ENCODE measurements at regions of chr10 and their contacts with region 1.

Region 1: DNA sequence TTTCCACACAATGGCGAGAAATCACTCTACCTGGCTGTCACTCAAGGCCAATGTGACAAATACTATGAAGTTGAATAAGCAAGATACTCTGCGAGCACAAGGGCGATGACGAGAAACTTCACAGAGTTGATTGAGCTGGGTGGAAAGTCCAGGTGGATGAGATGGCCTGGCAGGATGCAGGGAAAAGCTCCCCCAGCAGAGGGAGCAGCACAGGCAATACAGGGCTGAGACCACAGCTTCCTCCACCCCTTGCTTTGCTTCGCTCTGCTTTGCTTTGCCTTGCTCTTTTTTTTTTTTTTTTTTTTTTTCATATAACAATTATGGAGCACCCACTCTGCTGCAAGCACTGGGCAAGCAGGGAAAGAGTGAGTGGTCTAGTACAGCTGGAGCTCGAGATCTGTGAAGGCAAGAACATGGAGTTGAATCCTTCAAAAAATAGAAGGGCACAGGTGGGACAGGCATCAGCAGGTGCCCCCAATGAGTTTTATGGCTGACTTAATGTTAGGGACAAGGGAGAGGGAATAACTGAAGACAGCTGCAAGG is 88.3 kb downstream of the CABCOCO1 start:
- DNase-seq: peak; percentile 81

Region 2: DNA sequence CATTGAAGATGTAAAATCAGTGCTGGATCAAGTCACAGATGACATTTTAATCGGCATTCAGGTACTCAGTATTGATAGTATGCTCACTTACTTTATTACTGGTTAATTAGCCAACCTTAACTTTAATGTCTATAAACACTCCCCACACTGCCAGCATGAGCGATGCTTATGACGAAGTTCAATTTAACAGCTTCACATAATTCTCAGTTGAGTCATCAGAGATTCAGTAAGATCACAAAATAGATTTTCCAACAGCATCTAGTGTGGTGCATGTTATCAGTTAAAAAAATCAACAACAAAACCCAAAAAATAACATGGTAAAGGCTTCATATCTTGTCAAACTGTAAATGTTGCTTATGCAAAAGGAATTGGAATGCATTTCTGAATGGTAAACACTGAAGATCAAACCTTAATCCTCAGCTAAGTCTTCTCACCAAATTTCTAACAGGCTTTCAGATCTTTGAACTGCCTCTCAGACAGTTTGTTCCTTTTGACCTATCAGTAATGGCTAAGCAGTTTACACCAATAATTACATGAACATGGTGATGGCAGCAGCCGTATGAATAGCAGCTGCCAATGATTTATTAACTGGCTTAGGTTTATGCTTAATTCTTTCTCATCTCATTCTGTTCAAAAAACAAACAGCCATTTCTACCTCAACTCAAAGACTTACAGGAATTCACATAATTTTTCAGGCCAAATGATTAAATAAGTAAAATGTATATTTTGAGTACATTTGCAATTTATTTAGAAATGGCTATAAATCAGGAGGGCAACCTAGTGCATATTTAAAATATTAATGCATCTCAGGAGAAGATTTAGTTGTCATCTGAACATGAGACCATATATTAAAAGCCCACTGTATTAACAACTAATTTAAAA is 10.2 kb after region 1 on chr10:
- CTCF ChIA-PET with region 1: interaction called, 13 read pairs
- POLR2A ChIA-PET with region 1: interaction called, 3 read pairs
- DNase-seq: no peak

Region 3: DNA sequence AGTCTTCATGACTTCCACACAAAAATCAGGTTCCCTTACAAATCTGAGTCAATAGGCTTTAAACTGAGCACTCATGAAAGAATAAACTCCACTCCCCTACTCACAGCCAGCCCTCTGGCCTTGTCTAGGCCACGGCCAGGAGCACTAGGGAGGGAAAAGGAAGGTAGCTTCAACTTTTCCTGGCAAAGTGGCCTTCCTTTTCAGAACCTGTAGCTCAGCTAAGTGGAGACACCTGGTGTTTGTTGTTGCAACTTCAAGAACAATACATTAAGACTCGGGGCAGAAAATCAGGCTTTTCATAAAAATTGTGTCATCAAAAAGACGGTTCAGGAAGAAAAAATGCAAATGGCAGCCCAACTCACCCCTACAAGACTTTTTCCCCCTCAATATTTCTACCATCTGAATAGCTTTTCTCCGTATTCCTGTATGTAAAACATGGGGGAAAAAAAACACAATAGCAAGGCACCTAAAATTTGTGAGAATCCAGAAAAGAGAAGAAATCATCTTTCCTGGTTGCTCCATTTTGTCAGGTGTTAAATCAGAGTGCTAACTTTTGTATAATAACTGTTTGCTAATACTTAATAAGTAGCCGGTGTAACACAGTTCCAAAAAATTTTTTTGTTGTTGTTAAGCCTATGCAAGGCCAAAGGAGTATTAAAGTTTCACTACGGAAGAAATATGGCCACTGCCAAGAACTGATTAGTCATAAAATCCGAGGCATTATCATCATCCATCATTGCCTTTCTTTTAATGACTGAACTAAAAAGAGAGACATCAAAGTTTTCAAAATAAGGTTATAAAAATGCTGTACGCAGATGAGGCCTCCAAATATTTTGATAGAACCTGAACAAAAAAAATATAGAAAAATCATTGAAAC is 84.3 kb after region 1 on chr10:
- CTCF ChIA-PET with region 1: interaction called, 10 read pairs
- POLR2A ChIA-PET with region 1: interaction called, 3 read pairs
- DNase-seq: peak; percentile 55

Region 4: GRCh38 chr10:62112271-62112769 is 361.3 kb after region 1 on chr10:
- CTCF ChIA-PET with region 1: no interaction called
- POLR2A ChIA-PET with region 1: no interaction called
- DNase-seq: no peak